Activated T-helper 1 cell treated with anti-CD3 and anti-CD28 coated beads, Interleukin-12 subunit alpha, Interleukin-12 subunit beta, Interleukin-2, Interleukin-4 antibody, amounts not matched to agents 30 ng/mL and 10 ng/mL and 1 ng/mL, durations not matched to agents 14 hours and 24 hours and 36 hours (primary cell): ENCODE measurements at regions of chr16 and their contacts with region 1.

Region 1: GRCh38 chr16:81077076-81077940 is at the start of gene C16orf46:
- DNase-seq: peak; percentile 96
- H3K4me3 Mint-ChIP-seq: peak within 1 kb of the TSS; percentile 32
- H3K27ac Mint-ChIP-seq: peak within 1 kb of the TSS; percentile 24
- H3K4me1 Mint-ChIP-seq: no peaks in the 10 kb centered on the region
- H3K27me3 Mint-ChIP-seq: peaks cover 3% of the 10 kb centered on the region
- total RNA-seq, gene C16orf46: 0.32 and 0.41 TPM in 2 replicates

Region 2: GRCh38 chr16:79770244-79771064 is 1306.9 kb before region 1 on chr16:
- intact Hi-C with region 1: loop called (anchors 5 kb)
- DNase-seq: peak; percentile 71
- H3K4me3 Mint-ChIP-seq: peak overlapping the region; percentile 86
- H3K27ac Mint-ChIP-seq: peak overlapping the region; percentile 84
- H3K4me1 Mint-ChIP-seq: peaks cover 36% of the 10 kb centered on the region
- H3K27me3 Mint-ChIP-seq: no peaks in the 10 kb centered on the region

Region 3: DNA sequence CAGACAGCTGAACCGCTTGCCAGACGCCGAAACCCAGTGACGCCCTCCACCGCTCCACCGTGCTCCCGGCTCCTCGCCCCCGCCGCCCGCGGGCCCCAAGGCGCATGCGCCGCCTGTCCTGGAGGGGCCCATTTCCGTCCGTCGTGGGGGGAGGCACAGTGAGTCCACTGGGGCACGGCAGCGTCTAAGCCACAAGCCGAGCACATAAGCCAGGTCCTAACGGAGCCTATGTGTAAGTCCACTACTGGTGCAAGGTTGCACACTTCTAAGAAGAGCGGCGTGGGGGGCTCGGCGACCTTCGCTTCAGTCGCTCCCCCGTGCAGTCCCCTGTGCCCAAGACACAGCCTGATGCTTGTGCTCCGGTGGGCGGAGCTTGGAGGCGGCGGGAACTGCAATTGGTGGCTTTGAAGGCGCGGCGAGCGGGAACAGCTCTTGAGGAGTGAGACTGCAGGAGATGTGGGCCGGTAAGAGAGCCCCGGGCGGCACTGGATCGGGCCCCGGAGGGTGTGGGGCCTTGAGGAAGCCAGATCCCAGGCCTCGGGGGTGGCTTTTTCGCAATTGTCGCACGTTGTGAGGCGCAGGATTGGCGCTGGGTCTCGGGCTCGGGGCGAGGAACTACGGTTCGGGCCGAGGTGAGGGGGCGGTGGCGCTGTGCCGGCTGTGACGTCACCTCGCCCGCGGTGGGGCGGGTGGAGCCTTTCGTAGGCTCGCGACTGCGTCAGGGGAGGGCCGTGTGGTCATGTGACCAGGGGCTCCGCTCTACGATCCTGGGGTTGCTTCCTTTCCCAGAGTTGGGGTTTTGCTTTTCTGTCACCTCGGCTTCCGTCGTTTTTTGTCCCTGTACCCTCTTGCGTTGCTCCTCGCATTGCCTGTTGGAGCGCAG is 70.3 kb before region 1 on chr16 and contains the starts of genes CENPN and CMC2:
- intact Hi-C with region 1: loop called (anchors 1 kb)
- DNase-seq: peak; percentile 97
- H3K4me3 Mint-ChIP-seq: peak within 1 kb of the TSS; percentile 100
- H3K27ac Mint-ChIP-seq: peak within 1 kb of the TSS; percentile 100
- H3K4me1 Mint-ChIP-seq: peaks cover 61% of the 10 kb centered on the region
- H3K27me3 Mint-ChIP-seq: peaks cover 2% of the 10 kb centered on the region
- total RNA-seq, gene CENPN: 65.6 and 67.8 TPM in 2 replicates
- total RNA-seq, gene CMC2: 141 and 156 TPM in 2 replicates

Region 4: DNA sequence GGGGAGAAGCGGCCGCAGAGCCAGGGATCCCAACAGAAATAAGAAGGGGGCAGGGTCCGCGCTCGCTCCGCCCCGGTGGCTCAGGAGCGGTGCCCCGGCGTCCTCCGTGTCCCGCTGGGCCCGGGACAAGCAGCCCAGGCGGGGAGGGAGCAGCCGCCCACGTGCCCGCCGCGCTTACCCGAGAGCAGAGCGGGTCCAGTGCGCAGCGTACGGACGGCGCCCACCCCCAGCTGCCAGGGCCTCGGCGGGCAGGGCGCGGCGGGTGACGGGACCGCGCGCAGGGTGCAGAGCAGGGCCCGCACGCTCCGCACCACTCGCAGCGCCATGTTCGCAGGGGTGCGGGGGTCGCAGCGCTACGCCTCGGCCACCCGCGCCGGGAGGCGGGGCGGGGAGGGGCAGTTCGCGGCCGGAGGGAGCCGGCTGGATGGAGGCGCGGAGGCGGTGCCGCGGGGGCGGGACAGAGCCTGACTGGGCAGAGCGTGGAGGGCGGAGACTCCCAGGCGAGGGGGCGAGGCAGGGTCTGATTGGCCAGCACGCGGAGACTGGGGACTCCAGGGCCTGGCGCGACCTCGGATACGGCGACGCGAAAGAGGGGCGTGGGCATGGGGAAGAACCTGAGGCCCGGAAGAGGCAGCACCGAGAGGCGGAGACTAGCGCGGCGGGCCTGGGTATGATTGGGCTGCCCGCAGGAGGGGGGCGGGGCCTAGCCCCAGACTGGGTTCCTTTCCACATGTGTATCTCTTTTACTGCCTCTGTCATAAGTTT is 18.8 kb after region 1 on chr16 and contains the start of gene GCSH:
- intact Hi-C with region 1: loop called (anchors 1 kb)
- DNase-seq: peak; percentile 99
- H3K4me3 Mint-ChIP-seq: peak within 1 kb of the TSS; percentile 81
- H3K27ac Mint-ChIP-seq: peak within 1 kb of the TSS; percentile 46
- H3K4me1 Mint-ChIP-seq: peaks cover 6% of the 10 kb centered on the region
- H3K27me3 Mint-ChIP-seq: peaks cover 3% of the 10 kb centered on the region
- total RNA-seq, gene GCSH: 16.5 and 19.1 TPM in 2 replicates

Region 5: DNA sequence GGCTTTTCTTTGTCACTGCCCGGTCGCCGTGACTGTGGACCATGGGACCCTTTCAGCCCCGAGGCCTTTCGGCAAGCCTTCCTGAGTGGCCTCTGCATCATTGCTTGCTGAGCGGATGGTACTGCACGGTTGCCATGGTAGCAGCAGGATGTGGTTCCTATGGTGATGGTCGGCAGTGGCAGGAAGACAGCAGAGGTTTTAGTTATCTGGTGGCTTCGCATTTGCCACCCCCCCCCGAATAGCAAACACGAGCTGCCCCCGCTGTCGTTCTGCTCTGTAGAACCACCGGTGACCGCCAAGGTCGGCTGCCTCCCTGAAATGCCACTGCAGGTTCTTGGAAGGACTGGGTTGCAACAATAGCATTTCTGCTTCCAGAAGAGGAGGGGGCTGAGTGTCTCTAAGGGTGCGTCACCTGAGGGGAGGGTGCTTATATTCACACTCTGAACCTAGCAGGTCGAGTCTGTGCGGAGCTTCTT is 443.9 kb after region 1 on chr16:
- intact Hi-C with region 1: loop called (anchors 2 kb)
- DNase-seq: peak; percentile 81
- H3K4me3 Mint-ChIP-seq: peak overlapping the region; percentile 4
- H3K27ac Mint-ChIP-seq: peak overlapping the region; percentile 79
- H3K4me1 Mint-ChIP-seq: peaks cover 60% of the 10 kb centered on the region
- H3K27me3 Mint-ChIP-seq: no peaks in the 10 kb centered on the region

Region 6: DNA sequence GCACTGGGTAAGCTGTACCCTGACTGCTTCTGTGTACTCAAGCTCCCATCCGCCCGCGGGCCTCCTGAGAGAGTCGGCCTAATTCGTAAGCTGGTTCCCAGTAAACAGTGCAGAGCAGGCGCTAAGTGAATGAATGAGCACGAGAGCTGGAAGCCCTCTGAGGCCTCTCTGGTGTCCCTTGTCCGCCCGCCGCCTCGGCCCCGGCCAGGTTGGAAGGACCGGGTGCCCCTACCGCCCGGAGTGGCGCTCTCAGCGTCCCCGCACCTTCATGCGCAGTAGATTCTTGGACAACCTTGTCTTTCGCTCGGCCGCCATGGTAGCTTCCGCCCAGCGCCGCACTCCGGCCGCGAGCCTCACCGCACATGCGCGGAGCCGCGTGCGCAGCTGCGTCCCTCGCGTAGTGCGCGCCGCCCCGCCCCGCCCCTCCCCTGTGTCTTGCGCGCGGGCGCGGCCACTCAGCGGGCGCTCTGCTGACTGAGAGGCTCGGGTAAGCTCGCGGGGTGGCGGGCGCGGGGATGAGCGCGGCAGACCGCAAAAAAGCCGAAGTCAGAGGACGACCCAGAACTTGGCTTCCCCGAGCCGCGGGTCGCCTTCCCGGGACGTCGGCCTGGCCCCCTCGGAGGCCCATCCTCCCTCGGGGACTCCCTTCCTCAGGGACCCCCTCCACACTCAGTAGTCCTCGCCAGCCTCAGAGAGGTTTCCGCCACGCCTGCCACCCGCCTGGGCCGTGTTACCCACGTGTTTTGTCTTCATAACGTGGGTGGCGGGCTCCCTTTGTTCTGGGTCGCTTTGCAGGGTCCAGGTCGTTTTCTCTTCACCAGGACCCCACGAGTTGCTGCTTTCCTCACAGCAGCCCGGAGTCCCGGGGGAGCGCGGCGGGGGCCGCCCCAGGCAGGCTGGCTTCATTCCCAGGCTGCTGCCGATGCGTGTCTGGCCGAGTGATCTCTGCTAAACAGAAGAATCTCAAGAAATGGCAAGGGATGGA is 1092.8 kb after region 1 on chr16 and contains the start of gene MPHOSPH6:
- intact Hi-C with region 1: loop called (anchors 10 kb)
- DNase-seq: peak; percentile 85
- H3K4me3 Mint-ChIP-seq: peak within 1 kb of the TSS; percentile 94
- H3K27ac Mint-ChIP-seq: peak within 1 kb of the TSS; percentile 91
- H3K4me1 Mint-ChIP-seq: peaks cover 22% of the 10 kb centered on the region
- H3K27me3 Mint-ChIP-seq: peaks cover 29% of the 10 kb centered on the region
- total RNA-seq, gene MPHOSPH6: 49.6 and 49.8 TPM in 2 replicates